Heart right ventricle (tissue), 16 donors: ENCODE measurements at regions of chr3 and their contacts with region 1.

Region 1: GRCh38 chr3:170180908-170181879 is at the start of gene PHC3:
- DNase-seq: peak; percentile 95
- ATAC-seq: peak; percentile 93 to 98 (median 97)
- H3K4me3 ChIP-seq: peak within 1 kb of the TSS; percentile 71 to 99 (median 88)
- H3K27ac ChIP-seq: peak within 1 kb of the TSS; percentile 91 to 99 (median 94)
- H3K4me1 ChIP-seq: peaks cover 0 to 28% (median 23%) of the 10 kb centered on the region in 9 donors
- H3K27me3 ChIP-seq: no peaks in the 10 kb centered on the region
- CTCF ChIP-seq: peak in 7 of 9 donors; percentile 7 to 46 (median 26)
- total RNA-seq, gene PHC3: 39.6 to 70.8 (median 56.2) TPM

Region 2: GRCh38 chr3:170044795-170045244 is 136.4 kb before region 1 on chr3:
- intact Hi-C with region 1: no loop called
- DNase-seq: no peak
- ATAC-seq: peak in 2 of 8 donors; percentile 35 to 52
- H3K4me3 ChIP-seq: peak overlapping the region in 1 of 10 donors; percentile 20
- H3K27ac ChIP-seq: peak overlapping the region in 2 of 10 donors; percentile 9 to 88
- H3K4me1 ChIP-seq: peaks cover 0 to 20% (median 0%) of the 10 kb centered on the region in 9 donors
- H3K27me3 ChIP-seq: peaks cover 0 to 21% (median 0%) of the 10 kb centered on the region in 7 donors
- CTCF ChIP-seq: no peak

Region 3: DNA sequence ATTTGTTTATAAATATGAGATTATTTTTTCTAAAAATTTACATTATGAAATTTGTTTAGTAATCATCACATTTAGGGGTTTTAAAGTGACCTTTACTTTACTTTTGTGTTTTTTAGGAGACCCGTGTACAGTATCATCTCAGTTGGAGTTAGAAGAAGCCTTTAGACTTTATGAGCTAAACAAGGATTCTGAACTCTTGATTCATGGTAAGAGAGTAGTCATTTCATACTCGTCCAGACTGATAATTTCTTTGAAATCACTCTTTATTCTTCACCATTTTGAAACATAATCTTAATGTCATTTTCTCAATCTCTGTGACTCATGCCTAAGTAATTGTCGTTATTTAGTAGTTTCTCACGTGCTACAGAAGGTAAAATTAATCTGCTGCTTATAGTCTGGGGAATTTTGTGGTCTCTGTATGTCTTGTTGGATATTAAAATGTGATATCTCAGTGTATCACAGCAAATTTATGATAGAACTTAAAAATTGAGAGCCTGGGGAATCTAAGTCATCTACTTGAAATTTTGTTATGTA is 78.7 kb after region 1 on chr3:
- intact Hi-C with region 1: loop called in 1 of 10 experiments (anchors 10 kb)
- DNase-seq: no peak
- ATAC-seq: no peak
- H3K4me3 ChIP-seq: no peak overlapping the region
- H3K27ac ChIP-seq: no peak overlapping the region
- H3K4me1 ChIP-seq: no peaks in the 10 kb centered on the region
- H3K27me3 ChIP-seq: no peaks in the 10 kb centered on the region
- CTCF ChIP-seq: no peak

Region 4: DNA sequence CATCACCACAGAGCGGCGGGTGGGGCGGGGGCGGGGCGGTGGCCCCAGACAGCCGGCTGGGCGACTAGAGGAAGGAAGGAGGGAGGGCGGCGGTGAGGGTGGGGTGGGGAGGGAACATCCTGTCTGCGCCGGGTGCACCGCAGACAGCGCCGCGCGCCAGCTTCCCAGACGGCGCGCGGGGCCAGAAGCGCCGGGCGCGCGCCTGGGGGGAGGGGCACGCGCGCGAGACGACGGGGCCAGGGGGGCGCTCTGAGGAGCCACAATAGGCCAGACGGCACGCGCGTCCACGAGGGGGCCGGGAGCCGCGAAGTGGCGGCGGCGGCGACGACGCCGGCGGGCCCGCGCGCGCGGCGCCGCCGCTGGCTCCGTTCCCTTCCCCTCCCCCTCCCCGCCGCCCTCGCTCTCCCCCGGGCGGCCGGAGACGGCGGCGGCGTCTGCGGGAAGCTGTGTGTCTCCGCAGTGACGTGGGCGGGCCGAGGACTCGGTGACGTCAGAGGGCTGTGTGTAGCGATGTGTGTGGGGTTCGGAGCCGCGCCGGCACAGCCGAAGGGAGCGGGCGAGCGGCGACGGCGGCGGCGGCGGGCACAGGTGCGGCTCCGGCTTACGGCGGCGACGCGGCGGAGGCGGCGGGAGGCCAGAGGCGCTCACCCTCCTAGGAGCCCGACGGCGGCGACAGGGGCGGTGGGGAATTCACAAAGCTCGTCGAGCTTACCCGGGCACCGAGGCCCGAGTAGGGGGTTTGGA is 176.2 kb after region 1 on chr3 and contains the start of gene SKIL:
- intact Hi-C with region 1: loop called in 3 of 10 experiments (anchors 5 to 10 kb)
- DNase-seq: peak; percentile 97 to 98
- ATAC-seq: peak; percentile 82 to 90 (median 86)
- H3K4me3 ChIP-seq: peak within 1 kb of the TSS; percentile 77 to 100 (median 98)
- H3K27ac ChIP-seq: peak within 1 kb of the TSS; percentile 97 to 100 (median 100)
- H3K4me1 ChIP-seq: peaks cover 0 to 65% (median 47%) of the 10 kb centered on the region in 9 donors
- H3K27me3 ChIP-seq: no peaks in the 10 kb centered on the region
- CTCF ChIP-seq: peak in 4 of 9 donors; percentile 9 to 28 (median 22)
- total RNA-seq, gene SKIL: 17.7 to 32.1 (median 24.9) TPM